Testis (tissue), 5 donors: ENCODE measurements at regions of chr1 and their contacts with region 1.

Region 1: DNA sequence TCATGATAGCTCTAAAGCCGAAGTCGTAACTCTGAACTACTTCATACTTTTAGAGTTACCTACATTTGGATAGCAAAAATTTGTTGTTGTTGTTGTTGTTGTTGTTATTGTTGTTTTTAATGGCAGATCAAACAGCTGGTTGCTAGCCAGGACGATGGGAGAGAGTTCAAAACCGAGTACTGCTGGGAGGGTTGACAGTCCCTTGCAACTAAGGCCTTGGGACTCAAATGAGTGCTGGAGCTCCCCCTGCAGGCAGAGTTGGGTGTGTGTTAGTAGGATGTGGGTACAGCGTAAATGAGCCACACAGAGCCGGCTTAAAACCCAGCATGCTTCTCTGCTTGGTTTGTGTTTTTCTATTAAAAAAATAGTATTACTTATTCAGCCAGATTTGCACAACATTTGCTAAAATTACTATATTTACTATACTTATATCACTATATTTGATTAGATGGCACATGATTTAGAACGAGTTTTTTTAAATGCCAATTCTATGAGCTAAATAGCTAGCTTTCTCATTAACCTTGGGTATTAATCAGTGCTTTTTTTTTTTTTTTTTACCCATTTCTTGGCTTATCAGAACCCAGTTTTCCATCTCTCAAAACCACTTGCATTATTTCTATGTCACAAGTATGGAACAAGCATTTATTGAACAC is 129.2 kb upstream of the SYT6 start:
- DNase-seq: peak; percentile 95
- H3K4me3 ChIP-seq: no peak overlapping the region
- H3K27ac ChIP-seq: no peak overlapping the region
- H3K4me1 ChIP-seq: no peaks in the 10 kb centered on the region
- H3K27me3 ChIP-seq: no peaks in the 10 kb centered on the region
- CTCF ChIP-seq: peak; percentile 61 to 81 (median 61)
- POLR2A ChIP-seq: no peak

Region 2: GRCh38 chr1:113835642-113836307 is 447.1 kb before region 1 on chr1:
- intact Hi-C with region 1: loop called (anchors 10 kb)
- DNase-seq: no peak
- H3K4me3 ChIP-seq: no peak overlapping the region
- H3K27ac ChIP-seq: no peak overlapping the region
- H3K4me1 ChIP-seq: no peaks in the 10 kb centered on the region
- H3K27me3 ChIP-seq: no peaks in the 10 kb centered on the region
- CTCF ChIP-seq: peak; percentile 17 to 69 (median 29)
- POLR2A ChIP-seq: no peak

Region 3: DNA sequence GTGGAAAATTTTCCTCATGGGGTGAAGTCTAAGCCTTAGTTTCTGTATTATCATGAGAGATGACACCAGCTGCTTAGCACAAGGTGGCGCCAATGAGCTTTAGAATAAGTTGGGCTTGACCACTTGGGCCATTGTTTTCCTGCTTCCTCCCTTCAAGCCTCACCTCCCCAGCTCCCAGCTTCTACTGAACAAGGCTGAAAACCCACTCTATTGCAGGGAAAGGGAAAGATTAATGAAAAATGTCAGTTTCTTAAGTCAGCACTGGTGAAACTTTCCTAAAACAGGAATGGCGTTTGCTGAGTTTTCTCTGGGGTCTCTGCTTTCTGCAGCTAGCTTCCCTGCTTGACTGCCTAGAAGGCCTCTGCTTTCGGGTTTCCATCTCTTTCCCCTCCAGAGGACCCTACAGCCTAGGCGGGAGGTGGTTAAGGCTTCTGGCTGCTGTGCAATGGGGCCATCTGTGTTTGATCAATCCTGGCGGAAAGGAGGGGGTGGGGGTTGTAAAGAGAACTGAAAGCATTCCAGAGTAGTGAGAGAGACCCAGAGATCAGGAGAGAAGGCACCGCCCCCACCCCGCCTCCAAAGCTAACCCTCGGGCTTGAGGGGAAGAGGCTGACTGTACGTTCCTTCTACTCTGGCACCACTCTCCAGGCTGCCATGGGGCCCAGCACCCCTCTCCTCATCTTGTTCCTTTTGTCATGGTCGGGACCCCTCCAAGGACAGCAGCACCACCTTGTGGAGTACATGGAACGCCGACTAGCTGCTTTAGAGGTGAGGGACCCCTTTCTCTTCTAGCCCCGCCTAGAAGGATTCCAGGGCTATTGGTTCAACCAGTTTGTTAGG is 303.8 kb before region 1 on chr1 and contains the start of gene OLFML3:
- intact Hi-C with region 1: loop called (anchors 5 kb)
- DNase-seq: peak; percentile 94
- H3K4me3 ChIP-seq: no peak within 1 kb of the TSS
- H3K27ac ChIP-seq: peak within 1 kb of the TSS in 1 of 2 donors; percentile 57
- H3K4me1 ChIP-seq: peaks cover 29% of the 10 kb centered on the region
- H3K27me3 ChIP-seq: no peaks in the 10 kb centered on the region
- CTCF ChIP-seq: peak; percentile 52 to 78 (median 62)
- POLR2A ChIP-seq: no peak
- total RNA-seq, gene OLFML3: 4.6 to 8.5 TPM

Region 4: DNA sequence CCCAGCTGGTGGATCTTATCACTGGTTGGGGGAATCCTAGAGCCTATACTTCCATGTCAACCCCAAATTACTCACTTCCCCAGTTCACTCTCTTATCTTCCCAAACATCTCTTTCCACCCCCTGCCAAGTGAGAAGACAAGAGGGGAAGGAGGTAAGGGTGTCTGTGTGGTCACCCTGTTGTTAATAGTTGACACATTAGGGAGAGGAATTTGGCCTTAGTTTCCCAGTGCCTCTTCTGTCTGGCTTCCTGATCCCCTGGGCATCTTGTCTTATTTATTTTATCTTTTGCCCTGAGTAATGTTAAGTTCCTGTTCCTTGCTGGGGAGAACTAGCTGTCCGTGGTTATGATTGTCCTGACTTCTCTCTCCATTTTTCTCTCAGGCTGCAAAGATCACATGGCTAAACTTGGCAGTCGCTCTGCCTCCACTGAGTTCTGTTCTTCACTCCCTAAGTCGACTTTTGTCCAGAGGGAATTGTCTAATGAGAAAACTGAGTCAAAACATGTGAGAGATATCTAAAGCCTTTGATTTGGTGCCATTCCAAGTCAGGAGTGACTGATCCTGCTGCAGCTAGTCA is 27.9 kb after region 1 on chr1:
- intact Hi-C with region 1: no loop called
- DNase-seq: peak; percentile 78
- H3K4me3 ChIP-seq: no peak overlapping the region
- H3K27ac ChIP-seq: no peak overlapping the region
- H3K4me1 ChIP-seq: no peaks in the 10 kb centered on the region
- H3K27me3 ChIP-seq: no peaks in the 10 kb centered on the region
- CTCF ChIP-seq: no peak
- POLR2A ChIP-seq: no peak